ENCODE measurements at regions of chr1 and their contacts with region 1.

Region 1: GRCh38 chr1:84122780-84123382 is 21.2 kb upstream of the PRKACB start:
- DNase-seq: peak; percentile 79
- H3K4me3 Mint-ChIP-seq: no peak overlapping the region
- H3K27ac Mint-ChIP-seq: no peak overlapping the region
- H3K4me1 Mint-ChIP-seq: no peaks in the 10 kb centered on the region
- H3K27me3 Mint-ChIP-seq: no peaks in the 10 kb centered on the region

Region 2: DNA sequence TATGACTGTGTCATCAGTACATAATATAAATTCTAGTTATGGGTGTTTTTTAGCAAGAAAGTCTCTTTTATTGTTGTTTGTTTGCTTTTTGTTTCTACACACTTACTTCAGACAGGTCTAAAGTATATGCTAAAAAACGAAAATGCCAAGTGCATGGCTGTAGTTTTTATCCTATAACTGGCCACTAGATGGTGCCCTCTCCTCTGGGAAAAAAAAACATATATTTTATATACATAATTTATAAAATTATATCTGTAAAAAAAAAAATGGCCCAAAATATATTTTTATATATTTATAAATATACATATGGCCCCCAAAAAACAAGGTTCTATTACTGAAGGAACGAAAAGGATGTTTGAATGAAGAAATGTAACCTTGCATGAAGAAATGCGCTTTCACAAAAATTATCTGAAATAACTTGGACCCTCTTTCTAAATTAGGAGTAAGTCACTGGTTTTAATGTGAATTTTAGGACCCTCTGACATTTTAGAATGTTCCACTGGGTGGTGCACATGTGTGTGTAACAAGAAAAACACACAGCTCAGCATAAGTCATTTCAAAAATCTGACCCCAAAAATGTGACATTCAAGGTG is 217.5 kb before region 1 on chr1:
- CTCF ChIA-PET with region 1: interaction called, 4 read pairs
- intact Hi-C with region 1: loop called (anchors 1 kb)
- DNase-seq: peak; percentile 10
- H3K4me3 Mint-ChIP-seq: no peak overlapping the region
- H3K27ac Mint-ChIP-seq: no peak overlapping the region
- H3K4me1 Mint-ChIP-seq: no peaks in the 10 kb centered on the region
- H3K27me3 Mint-ChIP-seq: peaks cover 12% of the 10 kb centered on the region

Region 3: GRCh38 chr1:83931658-83932253 is 191.1 kb before region 1 on chr1:
- CTCF ChIA-PET with region 1: interaction called, 25 read pairs
- intact Hi-C with region 1: loop called (anchors 1 kb)
- DNase-seq: peak; percentile 24
- H3K4me3 Mint-ChIP-seq: no peak overlapping the region
- H3K27ac Mint-ChIP-seq: no peak overlapping the region
- H3K4me1 Mint-ChIP-seq: no peaks in the 10 kb centered on the region
- H3K27me3 Mint-ChIP-seq: peaks cover 8% of the 10 kb centered on the region

Region 4: GRCh38 chr1:83998498-83999315 is 124.2 kb before region 1 on chr1 and contains the start of gene TTLL7:
- CTCF ChIA-PET with region 1: interaction called, 4 read pairs
- intact Hi-C with region 1: loop called (anchors 2 kb)
- DNase-seq: peak; percentile 59
- H3K4me3 Mint-ChIP-seq: peak within 1 kb of the TSS; percentile 74
- H3K27ac Mint-ChIP-seq: no peak within 1 kb of the TSS
- H3K4me1 Mint-ChIP-seq: peaks cover 7% of the 10 kb centered on the region
- H3K27me3 Mint-ChIP-seq: peaks cover 53% of the 10 kb centered on the region
- total RNA-seq, gene TTLL7: not detected

Region 5: DNA sequence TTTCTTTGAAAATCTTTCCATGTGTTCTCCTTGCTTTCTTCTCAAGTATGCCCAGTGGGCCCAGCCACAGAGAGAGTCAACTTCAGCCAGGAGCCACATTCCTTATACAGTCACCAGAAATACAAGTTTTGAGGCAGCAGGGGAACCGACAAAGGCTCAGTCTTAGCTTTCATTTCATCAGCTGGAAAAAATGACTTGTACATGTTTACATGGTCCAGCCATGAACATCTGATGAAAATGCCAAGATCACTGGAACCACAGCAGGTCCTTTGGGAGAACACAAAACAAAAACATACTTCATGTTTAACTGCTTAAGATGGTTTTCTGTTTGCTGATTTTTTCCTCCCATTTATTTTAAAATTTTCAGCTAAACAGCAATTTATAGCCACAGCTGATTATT is 1005.5 kb after region 1 on chr1:
- CTCF ChIA-PET with region 1: no interaction called
- intact Hi-C with region 1: no loop called
- DNase-seq: no peak
- H3K4me3 Mint-ChIP-seq: no peak overlapping the region
- H3K27ac Mint-ChIP-seq: no peak overlapping the region
- H3K4me1 Mint-ChIP-seq: no peaks in the 10 kb centered on the region
- H3K27me3 Mint-ChIP-seq: no peaks in the 10 kb centered on the region